HEK293 (cell line): ENCODE measurements at regions of chr12 and their contacts with region 1.

Region 1: DNA sequence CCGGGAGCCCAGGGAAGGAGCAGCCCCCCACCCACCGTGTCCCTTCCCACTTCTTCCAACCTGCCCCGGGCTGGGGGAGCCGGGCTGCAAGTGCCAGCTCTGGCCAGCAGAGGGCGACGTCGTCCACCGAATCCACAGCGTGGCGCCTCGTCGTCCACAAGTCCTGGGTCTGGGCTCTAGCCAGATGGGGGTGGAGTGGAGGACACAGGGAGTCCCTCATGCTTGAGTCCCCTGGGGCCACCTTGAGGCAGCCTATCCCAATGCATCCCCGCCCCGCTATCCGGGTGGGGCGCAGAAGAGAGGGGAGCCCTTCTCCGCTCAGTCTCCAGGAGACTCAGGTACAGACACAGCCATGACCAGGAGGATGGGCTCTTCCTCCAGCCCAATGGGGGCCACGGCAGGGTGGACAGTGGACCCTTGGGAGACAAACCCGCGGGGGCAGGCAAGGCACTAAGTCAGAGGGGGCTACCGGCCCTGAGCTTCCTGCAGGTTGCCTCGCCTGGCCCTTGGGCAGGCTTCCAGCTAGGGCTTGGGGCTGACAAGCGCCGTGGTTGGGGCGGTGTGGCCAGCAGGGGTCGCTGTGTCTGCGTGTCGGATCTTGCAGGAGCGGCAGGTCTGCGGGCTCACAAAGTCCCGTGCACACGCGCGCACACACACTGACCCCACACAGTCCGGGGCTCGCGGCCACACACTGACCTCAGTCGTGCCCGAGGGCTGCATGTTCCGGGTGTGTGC is 5.5 kb downstream of the AQP5 start:
- H3K4me3 ChIP-seq: peak overlapping the region; percentile 31
- H3K27ac ChIP-seq: peak overlapping the region; percentile 32; the same call in 1 of the 2 replicates
- H3K4me1 ChIP-seq: no peaks in the 10 kb centered on the region
- CTCF ChIP-seq: peak; percentile 97

Region 2: DNA sequence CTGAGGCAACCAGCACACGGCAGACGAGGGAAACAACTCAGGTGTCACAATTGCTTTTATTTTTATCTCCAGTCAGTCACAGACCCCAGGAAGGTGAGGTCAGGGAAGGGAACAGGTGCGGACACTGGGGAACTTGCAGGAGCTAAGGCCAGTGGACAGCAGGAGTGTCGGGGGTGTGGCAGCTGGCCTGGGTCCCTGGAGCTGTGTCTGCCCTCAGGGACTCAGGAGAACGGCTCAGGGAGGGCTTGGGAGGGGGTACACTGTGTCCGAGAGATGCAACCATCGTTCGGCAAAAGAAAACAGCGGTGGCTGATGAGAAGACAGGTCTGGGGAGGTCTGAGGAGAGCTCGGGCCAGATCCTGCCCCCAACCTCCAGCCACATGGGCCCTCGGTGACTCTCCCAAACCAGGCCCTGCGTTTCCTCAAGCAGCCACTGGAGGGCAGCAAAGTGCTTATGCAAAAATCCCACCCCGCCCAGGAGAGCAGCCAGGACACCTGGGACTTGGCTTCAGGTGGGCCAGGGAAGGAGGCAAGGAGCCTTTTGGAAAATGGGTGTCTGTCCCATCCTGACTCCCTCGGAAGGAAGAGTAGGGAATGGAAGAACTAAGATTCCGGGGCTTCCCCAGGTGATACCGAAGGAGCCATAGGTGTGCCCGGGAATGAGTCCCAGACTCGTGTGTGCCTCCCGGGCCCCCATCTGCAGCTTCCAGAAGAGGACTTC is 100.2 kb before region 1 on chr12:
- CTCF ChIA-PET with region 1: interaction called, 99 read pairs
- POLR2A ChIA-PET with region 1: interaction called, 6 read pairs
- H3K4me3 ChIP-seq: no peak overlapping the region
- H3K27ac ChIP-seq: no peak overlapping the region
- H3K4me1 ChIP-seq: peaks cover 14% of the 10 kb centered on the region
- CTCF ChIP-seq: peak; percentile 88

Region 3: DNA sequence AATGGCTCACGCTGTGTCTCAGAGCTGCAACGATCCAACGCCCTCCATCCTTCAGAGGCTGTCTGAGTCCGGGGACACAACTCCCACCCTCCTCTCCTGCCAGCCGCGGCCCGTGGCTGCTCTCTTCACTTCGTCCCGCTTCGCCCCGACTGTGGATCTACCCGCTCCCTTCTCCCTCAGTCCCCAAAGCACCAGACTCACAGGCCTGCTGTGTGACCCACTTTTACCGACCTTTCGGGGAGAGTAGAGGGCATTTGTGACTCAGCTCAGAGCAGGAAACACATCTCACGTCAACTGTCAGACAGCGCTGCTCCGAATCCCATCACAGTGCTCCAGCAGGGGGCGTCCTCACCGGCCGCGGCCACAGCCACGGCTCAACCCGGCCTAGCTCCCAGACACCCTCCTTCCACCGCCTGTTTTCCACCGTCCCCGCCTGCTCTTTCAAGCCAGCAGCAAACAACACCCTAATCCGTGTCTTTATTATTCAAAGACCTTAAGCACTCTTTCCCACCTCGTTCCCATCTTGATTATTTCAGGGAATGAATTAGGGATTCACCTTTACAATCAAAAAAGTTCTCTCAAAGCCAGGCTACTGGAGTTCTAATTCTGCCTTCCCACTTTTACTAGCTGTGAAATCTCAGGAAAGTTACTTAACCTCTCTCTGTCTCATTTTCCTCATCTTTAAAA is 21.7 kb before region 1 on chr12:
- CTCF ChIA-PET with region 1: interaction called, 50 read pairs
- POLR2A ChIA-PET with region 1: interaction called, 4 read pairs
- H3K4me3 ChIP-seq: peak overlapping the region; percentile 14; the same call in 1 of the 2 replicates
- H3K27ac ChIP-seq: no peak overlapping the region
- H3K4me1 ChIP-seq: no peaks in the 10 kb centered on the region
- CTCF ChIP-seq: peak; percentile 98

Region 4: GRCh38 chr12:49998453-49998852 is 31.2 kb after region 1 on chr12:
- CTCF ChIA-PET with region 1: interaction called, 11 read pairs
- POLR2A ChIA-PET with region 1: no interaction called
- H3K4me3 ChIP-seq: no peak overlapping the region
- H3K27ac ChIP-seq: no peak overlapping the region
- H3K4me1 ChIP-seq: no peaks in the 10 kb centered on the region
- CTCF ChIP-seq: no peak

Region 5: DNA sequence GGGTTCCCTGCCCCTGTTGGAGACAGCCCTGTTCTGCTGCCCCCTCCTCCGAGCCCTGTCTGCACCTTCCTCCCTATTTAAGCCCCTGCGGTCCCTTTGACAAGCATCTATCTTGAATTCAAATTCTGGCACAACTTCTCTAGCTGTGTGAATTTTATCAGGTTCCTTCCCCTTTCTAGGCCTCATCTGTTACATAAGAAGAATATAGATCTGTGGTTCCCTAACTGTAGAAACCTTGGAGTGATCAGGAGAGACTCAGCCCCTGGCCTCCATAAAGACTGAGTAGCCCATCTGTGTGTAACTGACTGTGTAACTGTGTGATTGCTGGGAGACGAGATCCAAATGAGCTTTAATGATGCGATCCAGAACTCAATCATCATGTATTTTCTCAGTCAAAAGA is 71.1 kb after region 1 on chr12:
- CTCF ChIA-PET with region 1: interaction called, 55 read pairs
- POLR2A ChIA-PET with region 1: no interaction called
- H3K4me3 ChIP-seq: no peak overlapping the region
- H3K27ac ChIP-seq: no peak overlapping the region
- H3K4me1 ChIP-seq: no peaks in the 10 kb centered on the region
- CTCF ChIP-seq: no peak

Region 6: GRCh38 chr12:50066433-50066832 is 99.2 kb after region 1 on chr12:
- CTCF ChIA-PET with region 1: interaction called, 88 read pairs
- POLR2A ChIA-PET with region 1: interaction called, 5 read pairs
- H3K4me3 ChIP-seq: no peak overlapping the region
- H3K27ac ChIP-seq: no peak overlapping the region
- H3K4me1 ChIP-seq: no peaks in the 10 kb centered on the region
- CTCF ChIP-seq: no peak

Region 7: GRCh38 chr12:50167041-50167828 is 200.0 kb after region 1 on chr12 and contains the start of gene CERS5:
- CTCF ChIA-PET with region 1: interaction called, 13 read pairs
- POLR2A ChIA-PET with region 1: no interaction called
- H3K4me3 ChIP-seq: peak within 1 kb of the TSS; percentile 96
- H3K27ac ChIP-seq: peak within 1 kb of the TSS; percentile 84
- H3K4me1 ChIP-seq: peaks cover 3% of the 10 kb centered on the region; the same call in 1 of the 2 replicates
- CTCF ChIP-seq: peak; percentile 36

Region 8: GRCh38 chr12:50517456-50518048 is 550.3 kb after region 1 on chr12:
- CTCF ChIA-PET with region 1: no interaction called
- POLR2A ChIA-PET with region 1: no interaction called
- H3K4me3 ChIP-seq: no peak overlapping the region
- H3K27ac ChIP-seq: no peak overlapping the region
- H3K4me1 ChIP-seq: no peaks in the 10 kb centered on the region
- CTCF ChIP-seq: no peak